K562 (cell line): ENCODE measurements at regions of chr18 and their contacts with region 1.

Region 1: DNA sequence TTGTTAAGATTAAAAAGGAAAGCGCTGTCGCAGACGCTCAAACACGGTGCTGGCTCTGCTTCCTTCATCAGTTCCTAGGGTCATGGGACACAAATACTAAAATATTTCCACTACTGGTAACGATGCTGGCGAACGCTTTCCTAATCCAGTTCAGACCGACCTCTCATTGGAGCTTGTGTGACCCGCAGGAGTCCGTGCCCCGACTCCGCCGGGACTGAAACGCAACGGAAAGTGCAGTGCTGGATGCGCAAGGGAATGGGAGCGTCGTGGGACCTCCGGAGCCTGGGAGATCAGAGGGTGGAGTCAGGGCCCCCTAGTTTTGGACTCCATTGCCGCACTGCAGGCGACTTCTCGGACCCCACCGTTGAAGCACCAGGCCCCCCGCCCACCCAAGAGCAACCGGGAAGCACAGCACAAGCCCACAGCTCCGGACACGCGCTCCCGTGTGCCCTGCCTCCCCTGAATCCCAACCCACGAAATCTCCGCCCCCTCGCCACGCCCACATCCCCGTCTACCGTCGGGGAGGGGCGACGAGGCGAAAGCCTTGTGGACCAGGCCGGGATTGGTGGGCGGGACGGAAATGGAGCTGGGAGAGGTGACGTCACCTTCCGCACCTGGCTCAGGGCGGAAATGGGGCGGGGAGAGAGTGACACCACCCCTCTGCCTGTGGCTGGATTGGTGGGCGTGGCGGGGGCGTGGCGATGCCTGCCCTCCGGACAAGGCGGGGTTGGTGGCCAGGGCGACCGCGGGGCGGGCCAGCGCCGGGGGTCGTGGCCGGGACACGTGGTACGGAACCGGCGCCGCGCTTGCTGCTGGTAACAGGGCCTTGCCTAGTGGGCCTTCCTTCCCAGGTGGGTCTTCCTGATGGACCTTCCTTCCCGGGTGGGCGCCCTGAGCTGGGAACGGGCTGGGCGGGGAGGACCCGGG is at the start of gene CNDP2:
- DNase-seq: peak; percentile 90 to 97 (median 94)
- ATAC-seq: peak; percentile 91
- H3K4me3 ChIP-seq: peak within 1 kb of the TSS; percentile 80
- H3K27ac ChIP-seq: peak within 1 kb of the TSS; percentile 93
- H3K4me1 ChIP-seq: peaks cover 13 to 19% of the 10 kb centered on the region in 2 experiments; a peak in 4 of 5 replicates
- H3K27me3 ChIP-seq: no peaks in the 10 kb centered on the region
- CTCF ChIP-seq: no peak
- EP300 ChIP-seq: no peak
- POLR2A ChIP-seq: peak; percentile 84
- RAD21 ChIP-seq: no peak
- polyA plus RNA-seq, gene CNDP2: 34.1 to 53.8 TPM

Region 2: DNA sequence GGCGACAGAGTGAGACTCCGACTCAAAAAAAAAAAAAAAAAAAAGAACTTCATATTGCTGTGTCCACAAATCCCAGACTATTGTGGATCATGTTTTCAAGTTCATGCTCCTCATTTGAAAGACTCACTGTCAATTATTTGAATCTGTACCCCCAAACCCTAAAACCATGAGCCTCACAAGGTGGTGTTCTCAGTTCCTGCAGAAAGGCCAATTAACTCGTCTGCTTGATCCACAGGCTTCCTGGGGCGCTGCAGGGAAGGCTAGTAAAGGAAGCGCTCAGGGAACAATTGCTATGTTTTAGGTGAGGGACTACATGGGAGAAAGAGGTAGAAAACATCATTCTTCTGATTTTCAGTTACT is 1231.3 kb before region 1 on chr18:
- CTCF ChIA-PET with region 1: no interaction called
- POLR2A ChIA-PET with region 1: no interaction called
- in situ Hi-C with region 1: no loop called
- intact Hi-C with region 1: loop called (anchors 5 kb)
- DNase-seq: peak in 3 of 4 experiments; percentile 7 to 65 (median 28)
- ATAC-seq: peak; percentile 71
- H3K4me3 ChIP-seq: peak overlapping the region; percentile 51
- H3K27ac ChIP-seq: peak overlapping the region; percentile 93
- H3K4me1 ChIP-seq: no peaks in the 10 kb centered on the region
- H3K27me3 ChIP-seq: no peaks in the 10 kb centered on the region
- CTCF ChIP-seq: no peak
- EP300 ChIP-seq: no peak
- POLR2A ChIP-seq: peak; percentile 59
- RAD21 ChIP-seq: no peak

Region 3: GRCh38 chr18:74196220-74197119 is 299.4 kb before region 1 on chr18:
- CTCF ChIA-PET with region 1: no interaction called
- POLR2A ChIA-PET with region 1: no interaction called
- in situ Hi-C with region 1: no loop called
- intact Hi-C with region 1: loop called (anchors 5 kb)
- DNase-seq: peak; percentile 65 to 70 (median 68)
- ATAC-seq: peak; percentile 91
- H3K4me3 ChIP-seq: no peak overlapping the region
- H3K27ac ChIP-seq: no peak overlapping the region
- H3K4me1 ChIP-seq: no peaks in the 10 kb centered on the region; a peak in 2 of 5 replicates
- H3K27me3 ChIP-seq: peaks cover 0 to 11% of the 10 kb centered on the region in 2 experiments; a peak in 2 of 5 replicates
- CTCF ChIP-seq: peak; percentile 68 to 76 (median 72)
- EP300 ChIP-seq: no peak
- POLR2A ChIP-seq: no peak
- RAD21 ChIP-seq: peak; percentile 75 to 85

Region 4: DNA sequence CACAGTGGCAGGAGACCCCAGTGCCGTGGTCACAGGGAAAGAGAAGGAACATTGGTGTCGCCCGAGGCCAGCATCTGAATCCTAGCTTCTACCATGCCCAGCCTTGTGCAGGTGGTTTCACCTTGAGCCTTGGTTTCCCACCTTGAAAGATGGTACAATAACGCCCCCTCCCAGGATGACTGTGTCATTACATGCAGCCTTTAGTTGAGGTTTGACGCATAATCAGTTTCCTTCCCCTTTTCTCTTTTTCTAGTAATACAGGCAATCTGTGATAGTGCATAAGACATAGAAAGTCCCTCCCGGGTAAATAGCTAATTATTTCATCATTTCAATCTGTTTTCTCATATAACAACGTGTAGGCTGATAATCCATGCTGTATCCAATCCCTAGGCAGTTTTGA is 72.0 kb after region 1 on chr18:
- CTCF ChIA-PET with region 1: no interaction called
- POLR2A ChIA-PET with region 1: no interaction called
- in situ Hi-C with region 1: no loop called
- intact Hi-C with region 1: no loop called
- DNase-seq: no peak
- ATAC-seq: no peak
- H3K4me3 ChIP-seq: no peak overlapping the region
- H3K27ac ChIP-seq: no peak overlapping the region
- H3K4me1 ChIP-seq: no peaks in the 10 kb centered on the region; a peak in 1 of 5 replicates
- H3K27me3 ChIP-seq: peaks cover 0 to 9% of the 10 kb centered on the region in 2 experiments; a peak in 1 of 5 replicates
- CTCF ChIP-seq: peak in 2 of 3 experiments; percentile 3 to 34; a peak in 1 of 6 replicates
- EP300 ChIP-seq: no peak
- POLR2A ChIP-seq: no peak
- RAD21 ChIP-seq: no peak

Region 5: DNA sequence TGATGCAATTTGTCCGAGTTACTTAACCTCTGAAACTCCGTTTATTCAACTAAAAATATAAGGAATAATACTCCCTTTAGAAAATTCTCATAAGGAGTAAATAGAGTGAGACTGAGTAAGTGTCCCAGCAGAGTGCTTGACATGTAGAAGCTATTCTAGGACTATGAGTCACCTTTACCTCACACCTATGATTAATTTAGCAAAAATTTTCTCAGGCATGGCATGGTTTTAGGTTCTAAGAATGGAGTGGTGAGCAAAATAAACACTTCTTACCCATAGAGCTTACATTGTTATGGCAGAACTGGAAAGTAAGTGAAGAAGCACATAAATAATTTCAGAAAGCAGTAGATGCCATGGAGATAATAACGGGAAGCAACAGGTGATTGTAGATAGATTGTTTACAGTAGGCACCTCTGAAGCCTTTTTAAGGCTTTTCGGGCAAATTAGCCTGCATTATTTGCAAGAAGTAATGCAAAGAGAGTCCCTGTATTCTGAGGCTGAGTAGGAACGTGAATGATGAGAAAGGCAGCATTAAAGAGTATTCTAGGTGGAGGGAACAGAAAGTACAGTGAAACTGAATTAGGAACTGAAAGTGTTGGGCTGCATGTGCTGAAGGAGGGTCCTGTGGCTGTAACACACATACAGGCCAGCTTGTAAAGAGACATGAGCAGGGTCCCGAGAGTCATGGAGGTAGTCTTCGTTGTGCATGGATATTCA is 311.0 kb after region 1 on chr18:
- CTCF ChIA-PET with region 1: no interaction called
- POLR2A ChIA-PET with region 1: no interaction called
- in situ Hi-C with region 1: no loop called
- intact Hi-C with region 1: no loop called
- DNase-seq: no peak
- ATAC-seq: no peak
- H3K4me3 ChIP-seq: no peak overlapping the region
- H3K27ac ChIP-seq: no peak overlapping the region
- H3K4me1 ChIP-seq: peaks cover 0 to 13% of the 10 kb centered on the region in 2 experiments; a peak in 2 of 5 replicates
- H3K27me3 ChIP-seq: no peaks in the 10 kb centered on the region
- CTCF ChIP-seq: no peak
- EP300 ChIP-seq: no peak
- POLR2A ChIP-seq: no peak
- RAD21 ChIP-seq: no peak

Region 6: DNA sequence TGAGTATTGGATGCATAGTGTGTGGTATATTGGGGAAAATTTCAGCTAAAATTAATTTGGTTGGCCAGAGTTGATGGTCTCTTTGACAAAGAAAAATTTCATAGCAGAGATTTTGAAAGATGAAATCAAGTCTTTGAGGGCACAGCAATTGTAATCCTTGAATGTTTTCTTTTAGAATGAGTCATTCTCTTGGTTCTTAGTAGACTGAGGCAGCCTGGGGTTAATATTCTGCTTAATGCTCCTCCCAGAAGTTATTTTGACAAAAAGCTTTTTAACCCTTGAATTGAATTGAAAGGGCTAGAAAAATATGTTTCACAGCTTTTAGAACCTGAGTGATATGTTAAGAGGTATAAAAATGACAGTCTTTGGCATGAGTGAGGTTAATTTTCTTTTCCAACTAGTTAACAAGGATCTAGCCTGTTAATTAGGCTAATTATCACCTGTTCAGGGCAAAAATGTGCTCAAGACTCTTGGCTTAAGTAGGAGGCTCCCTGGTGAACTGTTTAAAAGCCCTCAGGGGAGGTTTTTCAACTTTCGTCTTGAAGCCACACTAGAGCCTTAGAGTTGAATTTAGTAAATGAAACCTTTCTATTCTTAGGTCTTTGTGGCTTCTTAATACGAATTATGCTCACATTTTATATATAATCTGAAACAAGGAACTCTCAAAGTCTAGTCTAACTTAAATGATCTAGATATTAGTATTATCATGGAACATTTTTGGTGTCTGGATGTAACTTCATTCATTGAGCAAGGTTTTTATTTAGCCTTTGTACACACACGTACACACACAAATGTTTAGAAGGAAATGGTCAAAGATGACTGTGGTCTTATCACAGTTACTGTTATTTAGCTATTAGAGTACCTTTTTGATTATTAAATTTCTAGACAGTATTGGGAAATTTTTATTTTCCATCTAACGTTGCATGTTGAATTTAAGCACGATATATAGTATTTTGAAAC is 374.3 kb after region 1 on chr18:
- CTCF ChIA-PET with region 1: no interaction called
- POLR2A ChIA-PET with region 1: no interaction called
- in situ Hi-C with region 1: no loop called
- intact Hi-C with region 1: no loop called
- DNase-seq: no peak
- ATAC-seq: no peak
- H3K4me3 ChIP-seq: no peak overlapping the region
- H3K27ac ChIP-seq: no peak overlapping the region
- H3K4me1 ChIP-seq: no peaks in the 10 kb centered on the region; a peak in 1 of 5 replicates
- H3K27me3 ChIP-seq: no peaks in the 10 kb centered on the region
- CTCF ChIP-seq: no peak
- EP300 ChIP-seq: no peak
- POLR2A ChIP-seq: no peak
- RAD21 ChIP-seq: no peak

Region 7: DNA sequence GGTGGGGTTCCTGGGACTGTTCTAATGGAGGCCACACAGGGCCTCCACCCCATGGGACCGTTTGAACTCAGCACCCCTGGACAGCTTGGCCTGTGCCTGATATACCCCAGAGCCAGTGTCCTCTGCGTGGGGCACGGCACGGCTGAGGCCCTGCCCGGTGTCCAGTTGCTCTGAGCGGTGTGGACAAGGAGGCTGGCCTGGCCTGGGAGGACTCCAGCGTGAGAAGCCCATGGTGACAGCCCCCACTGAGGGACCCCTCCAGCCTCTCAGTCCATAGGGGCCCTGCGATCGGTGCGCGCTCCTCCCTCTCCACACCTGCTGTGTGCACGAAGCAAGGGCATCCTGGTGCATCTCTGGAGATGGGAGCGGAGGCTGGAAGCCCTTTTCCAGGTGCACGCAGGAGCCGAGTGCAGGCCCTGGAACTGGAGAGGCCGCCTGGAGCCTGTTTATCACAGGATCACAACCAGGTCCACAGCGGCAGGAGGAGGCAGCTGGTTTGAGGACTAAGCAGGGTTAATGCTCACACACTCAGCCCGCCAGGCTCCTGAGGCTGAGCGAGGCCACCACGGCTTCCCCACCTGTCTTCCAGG is 592.9 kb after region 1 on chr18:
- CTCF ChIA-PET with region 1: no interaction called
- POLR2A ChIA-PET with region 1: no interaction called
- in situ Hi-C with region 1: no loop called
- intact Hi-C with region 1: no loop called
- DNase-seq: no peak
- ATAC-seq: no peak
- H3K4me3 ChIP-seq: no peak overlapping the region
- H3K27ac ChIP-seq: no peak overlapping the region
- H3K4me1 ChIP-seq: peaks cover 0 to 10% of the 10 kb centered on the region in 2 experiments; a peak in 2 of 5 replicates
- H3K27me3 ChIP-seq: peaks cover 0 to 12% of the 10 kb centered on the region in 2 experiments; a peak in 2 of 5 replicates
- CTCF ChIP-seq: no peak
- EP300 ChIP-seq: no peak
- POLR2A ChIP-seq: no peak
- RAD21 ChIP-seq: no peak